RWPE1 (cell line): ENCODE measurements at regions of chr12 and their contacts with region 1.

Region 1: DNA sequence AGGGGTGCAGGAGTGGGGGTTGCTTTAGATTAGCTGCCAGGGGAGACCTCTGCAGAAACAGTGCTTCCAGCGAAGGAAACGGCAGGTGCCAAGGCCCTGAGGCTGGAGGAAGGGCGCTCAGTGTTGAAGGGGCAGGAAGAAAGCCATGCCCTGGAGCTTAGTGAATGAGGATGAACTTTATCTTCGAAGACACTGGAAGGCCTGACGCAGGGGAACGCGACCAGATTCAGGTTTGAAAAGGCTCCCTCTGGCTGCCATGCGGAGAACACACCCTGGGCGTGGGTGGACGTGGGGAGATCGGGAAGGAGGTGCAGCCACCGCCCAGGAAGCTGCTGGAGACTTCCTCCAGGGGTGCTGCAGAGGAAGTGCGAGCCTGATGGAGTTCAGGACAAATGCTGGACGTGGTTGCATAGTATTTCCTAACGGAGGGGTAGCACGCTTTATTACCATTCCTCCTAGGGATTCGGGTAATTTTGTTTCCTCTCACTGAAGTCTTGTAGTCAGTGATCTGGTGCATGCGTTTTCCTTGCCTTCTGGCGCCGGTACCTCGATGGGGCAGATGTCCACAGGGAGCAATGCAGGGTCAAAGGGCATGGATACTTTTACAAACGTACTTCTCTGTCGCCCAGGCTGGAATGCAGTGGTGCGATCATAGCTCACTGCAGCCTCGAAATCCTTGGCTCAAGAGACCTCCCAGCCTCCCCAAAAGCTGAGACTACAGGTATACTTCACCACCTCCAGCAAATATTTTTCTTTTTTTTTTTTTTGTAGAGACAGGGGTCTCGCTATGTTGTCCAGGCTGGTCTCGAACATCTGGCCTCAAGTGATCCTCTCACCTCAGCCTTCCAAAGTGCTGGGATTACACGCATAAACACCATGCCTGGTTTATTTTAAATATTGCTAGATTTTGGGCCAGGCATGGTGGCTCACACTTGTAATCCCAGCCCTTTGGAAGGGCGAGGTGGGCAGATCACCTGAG is 26.4 kb upstream of the UBC start:
- DNase-seq: peak; percentile 88
- H3K27ac ChIP-seq: peak overlapping the region; percentile 98
- CTCF ChIP-seq: peak; percentile 95

Region 2: GRCh38 chr12:124906606-124907261 is 34.1 kb before region 1 on chr12:
- CTCF ChIA-PET with region 1: interaction called, 33 read pairs
- POLR2A ChIA-PET with region 1: no interaction called
- DNase-seq: peak; percentile 79
- H3K27ac ChIP-seq: no peak overlapping the region
- CTCF ChIP-seq: peak; percentile 98

Region 3: DNA sequence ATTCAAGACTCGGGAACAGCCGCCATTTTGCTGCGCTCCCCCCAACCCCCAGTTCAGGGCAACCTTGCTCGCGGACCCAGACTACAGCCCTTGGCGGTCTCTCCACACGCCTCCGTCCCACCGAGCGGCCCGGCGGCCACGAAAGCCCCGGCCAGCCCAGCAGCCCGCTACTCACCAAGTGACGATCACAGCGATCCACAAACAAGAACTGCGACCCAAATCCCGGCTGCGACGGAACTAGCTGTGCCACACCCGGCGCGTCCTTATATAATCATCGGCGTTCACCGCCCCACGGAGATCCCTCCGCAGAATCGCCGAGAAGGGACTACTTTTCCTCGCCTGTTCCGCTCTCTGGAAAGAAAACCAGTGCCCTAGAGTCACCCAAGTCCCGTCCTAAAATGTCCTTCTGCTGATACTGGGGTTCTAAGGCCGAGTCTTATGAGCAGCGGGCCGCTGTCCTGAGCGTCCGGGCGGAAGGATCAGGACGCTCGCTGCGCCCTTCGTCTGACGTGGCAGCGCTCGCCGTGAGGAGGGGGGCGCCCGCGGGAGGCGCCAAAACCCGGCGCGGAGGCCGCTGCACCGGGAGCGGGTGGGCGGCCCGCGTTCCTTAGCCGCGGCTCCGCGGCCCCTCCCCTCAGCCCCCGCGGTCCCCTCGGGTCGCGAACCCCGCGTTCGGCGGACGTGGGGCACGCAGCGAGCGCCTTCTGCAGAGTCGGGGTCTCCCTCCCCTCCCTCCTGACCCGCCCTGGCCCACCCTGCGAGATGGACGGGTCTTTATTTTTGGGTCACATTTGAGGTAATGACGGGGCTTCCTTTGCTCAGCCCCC is 26.2 kb before region 1 on chr12 and contains the start of gene UBC:
- CTCF ChIA-PET with region 1: interaction called, 11 read pairs
- POLR2A ChIA-PET with region 1: interaction called, 5 read pairs
- DNase-seq: peak; percentile 75
- H3K27ac ChIP-seq: peak within 1 kb of the TSS; percentile 99
- CTCF ChIP-seq: no peak

Region 4: GRCh38 chr12:124952801-124953200 is 12.0 kb after region 1 on chr12:
- CTCF ChIA-PET with region 1: interaction called, 10 read pairs
- POLR2A ChIA-PET with region 1: no interaction called
- DNase-seq: no peak
- H3K27ac ChIP-seq: peak overlapping the region; percentile 18
- CTCF ChIP-seq: no peak